ENCODE measurements at regions of chr7 and their contacts with region 1.

Region 1: DNA sequence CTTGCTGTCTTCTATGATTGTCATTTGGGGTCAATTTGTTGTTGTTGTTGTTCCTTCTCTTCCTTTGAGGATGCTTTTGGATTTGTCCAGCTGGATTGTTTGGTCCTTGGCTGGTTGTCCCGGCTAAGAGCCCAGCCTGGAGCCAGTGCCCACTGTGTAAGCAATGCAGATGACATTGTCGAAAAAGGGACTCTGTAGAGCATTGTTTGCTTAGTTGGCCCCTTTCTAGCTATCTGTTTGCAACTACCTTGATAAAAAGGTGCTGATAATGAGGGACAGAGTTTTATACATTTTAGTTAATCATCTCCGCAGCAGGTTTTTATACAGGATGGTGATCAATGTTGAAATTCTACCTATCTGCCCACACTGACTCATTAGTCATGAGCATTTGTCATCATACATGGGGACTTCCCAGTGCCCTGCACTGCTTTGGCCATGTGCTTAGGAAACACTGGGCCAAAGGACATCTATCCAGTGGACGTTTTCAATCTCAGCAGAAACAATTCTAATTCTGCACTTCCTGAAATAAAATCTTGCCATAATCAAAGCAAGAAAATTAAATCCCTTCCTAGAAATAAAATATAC is 311.9 kb downstream of the GRM8 start:
- DNase-seq: no peak
- ATAC-seq: no peak
- H3K4me3 ChIP-seq: no peak overlapping the region
- H3K27ac ChIP-seq: no peak overlapping the region
- H3K4me1 ChIP-seq: no peaks in the 10 kb centered on the region
- H3K27me3 ChIP-seq: no peaks in the 10 kb centered on the region
- CTCF ChIP-seq: no peak
- EP300 ChIP-seq: no peak
- POLR2A ChIP-seq: no peak
- RAD21 ChIP-seq: no peak

Region 2: GRCh38 chr7:126057979-126058378 is 882.8 kb before region 1 on chr7:
- CTCF ChIA-PET with region 1: no interaction called
- POLR2A ChIA-PET with region 1: no interaction called
- in situ Hi-C with region 1: no loop called
- intact Hi-C with region 1: loop called (anchors 5 kb)
- DNase-seq: no peak
- ATAC-seq: no peak
- H3K4me3 ChIP-seq: no peak overlapping the region
- H3K27ac ChIP-seq: no peak overlapping the region
- H3K4me1 ChIP-seq: no peaks in the 10 kb centered on the region
- H3K27me3 ChIP-seq: no peaks in the 10 kb centered on the region
- CTCF ChIP-seq: no peak
- EP300 ChIP-seq: no peak
- POLR2A ChIP-seq: no peak
- RAD21 ChIP-seq: no peak

Region 3: DNA sequence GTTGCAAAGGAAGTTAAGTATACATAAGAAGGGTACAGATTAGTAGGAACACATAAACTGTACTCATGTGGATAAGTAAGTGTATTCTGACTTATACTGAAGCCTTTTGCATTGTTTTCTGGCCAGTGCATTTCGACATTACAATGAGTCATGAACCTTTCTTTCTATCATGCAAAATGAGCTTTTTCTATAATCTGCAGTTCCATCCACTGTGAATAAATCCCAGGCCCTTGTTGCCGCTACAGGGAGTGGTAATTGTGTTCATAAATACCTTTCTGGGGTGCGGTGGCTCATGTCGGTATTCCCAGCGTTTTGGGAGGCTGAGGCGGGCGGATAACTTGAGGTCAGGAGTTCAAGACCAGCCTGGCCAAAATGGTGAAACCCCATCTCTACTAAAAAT is 546.4 kb before region 1 on chr7:
- CTCF ChIA-PET with region 1: no interaction called
- POLR2A ChIA-PET with region 1: no interaction called
- in situ Hi-C with region 1: no loop called
- intact Hi-C with region 1: no loop called
- DNase-seq: no peak
- ATAC-seq: no peak
- H3K4me3 ChIP-seq: no peak overlapping the region
- H3K27ac ChIP-seq: no peak overlapping the region
- H3K4me1 ChIP-seq: no peaks in the 10 kb centered on the region
- H3K27me3 ChIP-seq: no peaks in the 10 kb centered on the region
- CTCF ChIP-seq: no peak
- EP300 ChIP-seq: no peak
- POLR2A ChIP-seq: no peak
- RAD21 ChIP-seq: no peak

Measured in HepG2 (cell line).